ENCODE measurements at regions of chr3 and their contacts with region 1.

Region 1: DNA sequence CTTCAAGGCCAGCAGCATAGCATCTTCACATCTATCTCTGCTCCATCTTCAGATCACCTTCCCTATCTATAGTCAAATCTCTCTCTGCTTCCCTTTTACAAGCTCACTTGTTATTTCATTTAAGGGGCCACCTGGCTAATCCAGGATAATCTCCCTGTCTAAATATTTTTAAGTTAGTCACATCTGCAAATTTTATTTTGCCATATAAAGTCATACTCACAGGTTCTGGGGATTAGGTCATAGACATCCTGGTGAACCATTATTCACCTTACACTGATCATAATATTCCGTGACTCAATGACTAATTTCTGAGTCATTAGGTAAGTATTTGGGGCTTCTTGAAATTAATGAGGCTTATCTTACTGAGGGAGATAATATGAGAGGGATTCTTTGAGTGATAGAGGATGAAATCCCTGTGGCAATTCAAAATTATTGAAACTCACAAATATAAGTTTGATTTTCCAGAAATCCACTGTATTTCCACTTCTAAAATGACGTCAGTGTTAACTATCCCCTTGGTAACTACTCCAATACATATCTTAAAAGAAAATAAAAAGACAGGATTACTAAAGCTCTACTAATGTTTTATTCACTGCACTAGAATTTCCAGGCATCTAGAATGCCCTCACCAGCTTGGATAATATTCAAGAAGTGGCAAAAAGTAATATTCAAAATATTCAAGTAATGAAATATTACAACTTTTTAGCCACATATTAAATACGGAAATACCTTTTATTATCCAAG is 93.7 kb upstream of the RBMS3 start:
- DNase-seq: no peak
- ATAC-seq: no peak
- H3K4me3 Mint-ChIP-seq: no peak overlapping the region
- H3K27ac Mint-ChIP-seq: no peak overlapping the region
- H3K4me1 Mint-ChIP-seq: no peaks in the 10 kb centered on the region
- H3K27me3 Mint-ChIP-seq: no peaks in the 10 kb centered on the region
- CTCF ChIP-seq: no peak

Region 2: GRCh38 chr3:29370476-29371420 is 183.6 kb after region 1 on chr3:
- CTCF ChIA-PET with region 1: no interaction called
- POLR2A ChIA-PET with region 1: no interaction called
- intact Hi-C with region 1: no loop called
- DNase-seq: no peak
- ATAC-seq: no peak
- H3K4me3 Mint-ChIP-seq: no peak overlapping the region
- H3K27ac Mint-ChIP-seq: no peak overlapping the region
- H3K4me1 Mint-ChIP-seq: no peaks in the 10 kb centered on the region
- H3K27me3 Mint-ChIP-seq: no peaks in the 10 kb centered on the region
- CTCF ChIP-seq: no peak

Region 3: GRCh38 chr3:29447946-29448627 is 260.9 kb after region 1 on chr3:
- CTCF ChIA-PET with region 1: no interaction called
- POLR2A ChIA-PET with region 1: no interaction called
- intact Hi-C with region 1: loop called (anchors 2 kb)
- DNase-seq: no peak
- ATAC-seq: no peak
- H3K4me3 Mint-ChIP-seq: no peak overlapping the region
- H3K27ac Mint-ChIP-seq: no peak overlapping the region
- H3K4me1 Mint-ChIP-seq: no peaks in the 10 kb centered on the region
- H3K27me3 Mint-ChIP-seq: no peaks in the 10 kb centered on the region
- CTCF ChIP-seq: no peak